ENCODE measurements at regions of chr9 and their contacts with region 1.

Region 1: GRCh38 chr9:4984621-4985385 is at the start of gene JAK2:
- DNase-seq: peak; percentile 91 to 95
- ATAC-seq: peak; percentile 93 to 96 (median 94)
- H3K4me3 ChIP-seq: peak within 1 kb of the TSS; percentile 95
- H3K27ac ChIP-seq: peak within 1 kb of the TSS; percentile 99
- H3K4me1 ChIP-seq: peaks cover 46% of the 10 kb centered on the region
- H3K27me3 ChIP-seq: no peaks in the 10 kb centered on the region
- CTCF ChIP-seq: peak; percentile 46
- total RNA-seq, gene JAK2: 9.0 to 32.3 (median 16.8) TPM

Region 2: DNA sequence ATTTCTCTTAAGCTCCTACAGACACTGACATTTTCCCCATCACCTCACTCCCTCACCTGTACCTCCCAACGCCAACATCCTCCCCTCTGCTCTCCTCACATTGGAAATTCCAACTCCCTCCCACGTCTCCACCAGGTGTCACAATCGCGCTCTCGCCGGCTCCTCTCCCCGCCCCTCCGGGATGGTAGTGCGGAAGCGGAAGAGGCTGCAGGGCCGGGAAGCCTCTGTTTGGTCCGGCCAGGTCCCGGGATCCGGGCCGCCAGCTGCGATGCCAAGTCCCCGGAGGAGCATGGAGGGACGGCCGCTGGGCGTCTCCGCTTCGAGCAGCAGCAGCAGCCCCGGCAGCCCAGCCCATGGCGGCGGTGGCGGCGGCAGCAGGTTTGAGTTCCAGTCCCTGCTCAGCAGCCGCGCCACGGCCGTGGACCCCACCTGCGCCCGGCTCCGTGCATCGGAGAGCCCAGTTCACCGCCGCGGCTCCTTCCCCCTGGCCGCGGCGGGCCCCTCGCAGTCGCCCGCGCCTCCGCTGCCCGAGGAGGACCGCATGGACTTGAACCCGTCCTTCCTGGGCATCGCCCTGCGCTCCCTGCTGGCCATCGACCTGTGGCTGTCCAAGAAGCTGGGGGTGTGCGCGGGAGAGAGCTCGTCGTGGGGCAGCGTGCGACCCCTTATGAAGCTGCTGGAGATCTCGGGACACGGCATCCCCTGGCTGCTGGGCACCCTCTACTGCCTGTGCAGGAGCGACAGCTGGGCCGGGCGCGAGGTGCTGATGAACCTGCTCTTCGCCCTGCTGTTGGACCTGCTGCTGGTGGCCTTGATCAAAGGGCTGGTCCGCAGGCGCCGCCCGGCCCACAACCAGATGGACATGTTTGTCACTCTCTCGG is 322.5 kb before region 1 on chr9 and contains the start of gene PLPP6:
- intact Hi-C with region 1: loop called in 1 of 2 experiments (anchors 10 kb)
- DNase-seq: peak; percentile 87 to 94
- ATAC-seq: peak; percentile 96 to 98 (median 97)
- H3K4me3 ChIP-seq: peak within 1 kb of the TSS; percentile 69
- H3K27ac ChIP-seq: peak within 1 kb of the TSS; percentile 60
- H3K4me1 ChIP-seq: peaks cover 24% of the 10 kb centered on the region
- H3K27me3 ChIP-seq: no peaks in the 10 kb centered on the region
- CTCF ChIP-seq: peak; percentile 50
- total RNA-seq, gene PLPP6: 1.1 to 2.3 (median 1.9) TPM

Region 3: GRCh38 chr9:4762108-4762885 is 222.5 kb before region 1 on chr9:
- intact Hi-C with region 1: loop called (anchors 2 to 5 kb)
- DNase-seq: peak; percentile 53 to 77
- ATAC-seq: peak in 3 of 4 donors; percentile 64 to 85 (median 70)
- H3K4me3 ChIP-seq: peak overlapping the region; percentile 37
- H3K27ac ChIP-seq: peak overlapping the region; percentile 47
- H3K4me1 ChIP-seq: peaks cover 11% of the 10 kb centered on the region
- H3K27me3 ChIP-seq: no peaks in the 10 kb centered on the region
- CTCF ChIP-seq: peak; percentile 72

Region 4: GRCh38 chr9:4792572-4793458 is 192.0 kb before region 1 on chr9 and contains the start of gene RCL1:
- intact Hi-C with region 1: loop called in 1 of 2 experiments (anchors 2 kb)
- DNase-seq: peak; percentile 96 to 98
- ATAC-seq: peak; percentile 94 to 98 (median 96)
- H3K4me3 ChIP-seq: peak within 1 kb of the TSS; percentile 78
- H3K27ac ChIP-seq: peak within 1 kb of the TSS; percentile 96
- H3K4me1 ChIP-seq: peaks cover 29% of the 10 kb centered on the region
- H3K27me3 ChIP-seq: no peaks in the 10 kb centered on the region
- CTCF ChIP-seq: no peak
- total RNA-seq, gene RCL1: 16.0 to 29.5 (median 17.9) TPM

Region 5: DNA sequence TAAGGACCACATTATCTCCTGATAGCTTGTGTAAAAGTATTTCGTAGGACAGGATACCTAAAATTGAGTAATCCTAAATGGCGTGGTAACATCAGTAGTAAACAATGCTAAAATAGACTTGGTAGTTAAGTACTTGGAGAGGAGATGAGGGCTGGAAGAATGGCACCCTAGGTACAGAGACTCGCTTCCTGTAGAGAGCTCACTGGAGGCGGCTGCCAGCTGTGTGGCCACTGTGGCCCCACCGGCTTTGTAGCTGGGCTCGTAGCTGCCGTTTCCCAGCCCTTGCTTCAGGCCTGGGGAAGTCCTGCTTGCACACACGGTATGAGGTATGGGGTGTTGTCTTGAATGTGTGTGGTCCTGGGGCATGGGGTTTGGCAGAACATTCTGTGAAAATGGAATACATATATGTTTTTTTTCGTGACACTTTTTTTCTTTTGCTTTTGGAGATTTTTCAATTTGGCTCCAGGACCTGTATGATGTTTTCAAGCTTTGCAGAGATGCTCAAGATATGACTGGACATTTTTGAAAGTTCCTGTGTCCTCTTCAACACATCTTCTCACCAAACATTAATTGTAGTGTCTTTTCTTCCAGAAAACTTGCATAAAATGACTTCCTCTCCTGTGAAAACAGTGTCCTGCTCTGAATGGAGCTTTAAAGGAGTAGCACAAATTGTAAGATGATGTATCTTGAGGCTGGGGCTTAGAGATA is 134.0 kb before region 1 on chr9:
- intact Hi-C with region 1: loop called (anchors 5 kb)
- DNase-seq: no peak
- ATAC-seq: peak; percentile 19 to 77 (median 65)
- H3K4me3 ChIP-seq: no peak overlapping the region
- H3K27ac ChIP-seq: peak overlapping the region; percentile 43
- H3K4me1 ChIP-seq: peaks cover 21% of the 10 kb centered on the region
- H3K27me3 ChIP-seq: no peaks in the 10 kb centered on the region
- CTCF ChIP-seq: no peak

Region 6: GRCh38 chr9:4855841-4856240 is 129.0 kb before region 1 on chr9:
- intact Hi-C with region 1: loop called (anchors 5 kb)
- DNase-seq: peak in 1 of 2 donors; percentile 21
- ATAC-seq: peak in 2 of 4 donors; percentile 16 to 26
- H3K4me3 ChIP-seq: no peak overlapping the region
- H3K27ac ChIP-seq: peak overlapping the region; percentile 75
- H3K4me1 ChIP-seq: peaks cover 44% of the 10 kb centered on the region
- H3K27me3 ChIP-seq: no peaks in the 10 kb centered on the region
- CTCF ChIP-seq: no peak

Measured in psoas muscle (tissue), 8 donors.